OCI-LY7 (cell line): ENCODE measurements at regions of chr2 and their contacts with region 1.

Region 1: DNA sequence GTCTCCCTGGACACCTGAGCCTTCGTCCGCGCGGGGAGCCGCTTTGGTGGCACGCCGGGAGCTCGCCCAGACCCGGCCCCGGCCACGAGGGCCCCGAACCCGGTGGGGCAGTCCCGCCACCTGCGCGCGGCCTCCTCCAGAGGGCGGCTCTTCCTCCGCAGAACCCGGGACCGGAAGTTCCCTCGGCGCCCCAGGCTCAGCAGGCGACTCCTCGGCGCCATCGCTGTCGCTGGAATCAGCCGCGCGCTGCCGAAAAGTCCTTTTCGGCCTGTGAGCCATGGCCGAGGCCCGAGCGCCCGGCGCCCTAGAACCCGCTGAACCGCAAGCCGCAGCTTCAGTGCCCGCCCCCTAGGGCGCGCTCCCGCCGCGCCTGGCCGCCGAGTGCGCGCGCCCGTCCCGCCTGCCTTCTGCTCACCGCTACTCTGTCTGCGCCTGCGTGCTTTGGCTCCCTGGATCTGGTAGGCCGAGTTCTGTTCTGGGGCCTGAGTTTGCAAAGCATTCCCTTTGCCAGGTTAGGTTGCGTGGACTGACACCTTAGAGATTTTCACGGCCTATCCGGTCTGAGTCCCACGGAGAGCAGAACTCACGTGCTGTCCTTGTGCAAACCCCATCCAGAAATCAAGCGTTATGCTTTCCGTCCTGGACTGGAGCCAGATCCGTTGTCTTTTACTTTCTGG is at the start of gene GCFC2:
- DNase-seq: peak; percentile 91
- H3K4me3 ChIP-seq: peak within 1 kb of the TSS; percentile 72
- H3K27ac ChIP-seq: peak within 1 kb of the TSS; percentile 83
- H3K4me1 ChIP-seq: peaks cover 21% of the 10 kb centered on the region
- CTCF ChIP-seq: peak; percentile 45
- total RNA-seq, gene GCFC2: 21.8 and 29.0 TPM in 2 replicates

Region 2: GRCh38 chr2:75646583-75647425 is 63.9 kb before region 1 on chr2 and contains the start of gene MRPL19:
- CTCF ChIA-PET with region 1: no interaction called
- POLR2A ChIA-PET with region 1: interaction called, 7 read pairs
- intact Hi-C with region 1: loop called (anchors 2 kb)
- DNase-seq: peak; percentile 90
- H3K4me3 ChIP-seq: peak within 1 kb of the TSS; percentile 83
- H3K27ac ChIP-seq: peak within 1 kb of the TSS; percentile 52
- H3K4me1 ChIP-seq: peaks cover 16% of the 10 kb centered on the region
- CTCF ChIP-seq: no peak
- total RNA-seq, gene MRPL19: 41.6 and 42.6 TPM in 2 replicates

Region 3: DNA sequence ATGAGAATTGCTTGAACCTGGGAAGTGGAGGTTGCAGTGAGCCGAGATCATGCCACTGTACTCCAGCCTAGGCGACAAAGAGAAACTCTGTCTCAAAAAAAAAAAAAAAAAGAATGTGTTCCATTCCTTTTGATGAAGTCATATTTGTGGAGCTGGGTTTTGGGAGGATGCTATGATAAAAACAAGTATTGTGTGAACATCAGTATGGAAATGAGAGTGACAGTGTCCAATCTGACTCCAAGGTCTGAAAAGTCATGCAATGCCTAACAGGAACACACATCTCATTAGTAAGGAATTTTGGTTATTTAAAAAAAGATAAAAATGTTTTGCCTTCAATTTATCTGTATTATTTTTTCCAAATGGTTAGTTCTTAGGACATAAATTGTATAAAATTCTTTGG is 11.8 kb before region 1 on chr2:
- CTCF ChIA-PET with region 1: no interaction called
- POLR2A ChIA-PET with region 1: interaction called, 10 read pairs
- intact Hi-C with region 1: no loop called
- DNase-seq: no peak
- H3K4me3 ChIP-seq: no peak overlapping the region
- H3K27ac ChIP-seq: no peak overlapping the region
- H3K4me1 ChIP-seq: no peaks in the 10 kb centered on the region
- CTCF ChIP-seq: no peak

Region 4: DNA sequence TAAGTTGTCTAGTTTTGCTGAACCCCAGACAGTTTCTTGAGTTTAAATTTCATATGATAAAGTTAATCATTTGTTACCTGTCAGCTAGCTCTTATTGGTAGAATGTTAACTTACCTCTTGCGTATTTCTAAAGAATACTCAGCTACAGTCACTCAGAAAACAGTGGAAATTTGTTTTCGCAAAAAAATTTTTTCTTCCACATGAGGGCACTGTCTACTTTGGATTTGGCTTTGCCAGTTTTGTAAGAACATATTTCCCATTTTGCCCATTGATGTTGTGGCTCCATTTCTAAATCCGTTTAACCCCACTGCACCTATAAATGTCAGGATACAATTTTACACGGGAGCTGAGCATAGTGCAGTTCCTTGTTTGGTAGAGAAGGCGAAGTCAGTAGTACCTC is 19.1 kb after region 1 on chr2:
- CTCF ChIA-PET with region 1: no interaction called
- POLR2A ChIA-PET with region 1: no interaction called
- intact Hi-C with region 1: no loop called
- DNase-seq: no peak
- H3K4me3 ChIP-seq: no peak overlapping the region
- H3K27ac ChIP-seq: no peak overlapping the region
- H3K4me1 ChIP-seq: no peaks in the 10 kb centered on the region
- CTCF ChIP-seq: peak; percentile 65